PC-9 (cell line): ENCODE measurements at regions of chr3 and their contacts with region 1.

Region 1: DNA sequence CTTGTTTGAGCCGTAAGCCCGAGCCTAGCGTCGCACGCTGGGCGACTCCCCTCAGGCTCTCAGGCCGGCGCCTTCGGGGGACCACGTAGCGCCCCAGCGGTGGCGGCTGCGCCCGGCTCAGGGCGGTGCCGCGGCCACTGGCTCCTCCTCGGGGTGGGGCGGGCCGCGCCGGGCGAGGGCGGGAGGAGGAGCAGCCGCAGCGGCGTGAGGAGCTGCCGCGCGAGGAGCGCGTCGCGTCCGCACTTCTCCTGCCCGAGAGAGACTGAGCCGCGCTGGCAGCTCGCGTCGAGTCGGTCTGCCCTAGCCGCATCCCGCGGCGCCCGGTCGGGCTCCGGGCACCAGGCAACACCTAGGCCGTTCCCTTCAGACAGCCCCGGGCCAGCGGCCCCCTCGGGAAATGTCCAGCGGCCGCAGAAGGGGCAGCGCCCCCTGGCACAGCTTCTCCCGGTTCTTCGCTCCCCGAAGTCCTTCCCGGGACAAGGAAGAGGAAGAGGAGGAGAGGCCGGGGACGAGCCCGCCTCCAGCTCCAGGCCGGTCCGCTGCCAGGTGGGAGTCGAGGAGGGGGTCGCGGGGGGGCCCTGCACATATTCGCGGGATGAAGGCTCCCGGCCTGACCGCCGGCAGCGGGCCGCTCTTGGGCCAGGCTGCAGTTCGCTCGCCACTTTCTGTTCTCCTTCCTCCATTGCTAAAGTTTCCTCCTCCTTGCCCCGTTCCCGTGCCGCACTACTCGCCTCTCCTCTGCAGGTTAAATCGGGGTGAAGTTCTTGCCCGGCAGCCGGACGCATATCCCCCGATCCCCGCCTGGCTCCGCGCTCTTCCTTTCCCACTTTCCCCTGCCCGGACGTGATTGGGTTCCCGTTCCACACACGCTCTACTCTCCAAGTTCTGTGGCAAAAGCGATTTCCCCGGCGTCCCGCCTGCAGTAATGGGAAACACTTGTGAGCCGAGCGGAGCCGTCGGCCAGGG is at the start of gene CRYBG3:
- DNase-seq: peak; percentile 77 to 92
- H3K4me3 ChIP-seq: peak within 1 kb of the TSS; percentile 71
- H3K27ac ChIP-seq: peak within 1 kb of the TSS; percentile 36
- H3K4me1 ChIP-seq: peaks cover 19% of the 10 kb centered on the region
- H3K27me3 ChIP-seq: no peaks in the 10 kb centered on the region
- CTCF ChIP-seq: peak; percentile 60
- total RNA-seq, gene CRYBG3: 15.5 and 17.2 TPM in 2 replicates

Region 2: GRCh38 chr3:97391167-97391566 is 430.9 kb before region 1 on chr3:
- CTCF ChIA-PET with region 1: no interaction called
- POLR2A ChIA-PET with region 1: no interaction called
- intact Hi-C with region 1: no loop called
- DNase-seq: no peak
- H3K4me3 ChIP-seq: no peak overlapping the region
- H3K27ac ChIP-seq: no peak overlapping the region
- H3K4me1 ChIP-seq: no peaks in the 10 kb centered on the region
- H3K27me3 ChIP-seq: no peaks in the 10 kb centered on the region
- CTCF ChIP-seq: no peak

Region 3: GRCh38 chr3:97863031-97863430 is 40.9 kb after region 1 on chr3:
- CTCF ChIA-PET with region 1: no interaction called
- POLR2A ChIA-PET with region 1: no interaction called
- intact Hi-C with region 1: loop called (anchors 1 kb)
- DNase-seq: peak; percentile 24 to 93
- H3K4me3 ChIP-seq: no peak overlapping the region
- H3K27ac ChIP-seq: peak overlapping the region; percentile 32
- H3K4me1 ChIP-seq: peaks cover 18% of the 10 kb centered on the region
- H3K27me3 ChIP-seq: no peaks in the 10 kb centered on the region
- CTCF ChIP-seq: no peak

Region 4: DNA sequence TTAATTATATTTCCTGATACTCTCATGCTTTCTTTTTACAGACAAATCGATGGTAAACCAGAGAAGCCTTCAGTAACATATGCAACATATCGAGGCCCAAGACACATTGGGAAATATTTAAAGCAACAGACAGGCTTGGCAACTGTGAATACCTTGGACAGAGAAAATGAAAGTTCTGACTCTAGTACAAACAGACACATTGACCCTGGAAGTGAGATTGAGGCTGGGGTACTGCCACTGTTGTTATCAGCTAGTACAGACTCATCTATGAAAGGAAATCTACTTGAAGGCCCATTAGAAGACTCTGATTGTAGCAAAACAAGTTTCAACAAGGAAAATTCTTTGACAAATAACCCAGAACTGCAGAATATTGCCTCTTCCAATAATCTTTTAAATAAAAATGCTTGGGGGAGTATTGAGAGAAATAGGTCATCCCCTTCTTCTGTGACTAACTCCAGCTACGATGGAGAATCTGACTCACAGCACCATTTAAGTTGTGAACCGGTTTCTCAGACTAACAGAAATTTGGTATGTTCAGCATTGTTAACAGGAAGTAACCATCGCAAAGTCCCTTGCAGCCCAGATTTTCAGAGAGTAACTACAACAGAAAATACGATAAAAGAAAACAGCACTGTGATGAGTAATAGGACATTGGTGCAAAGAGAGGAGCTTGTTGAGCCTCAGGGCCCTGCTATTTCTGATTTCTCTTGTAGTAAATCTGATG is 49.9 kb after region 1 on chr3:
- CTCF ChIA-PET with region 1: no interaction called
- POLR2A ChIA-PET with region 1: no interaction called
- intact Hi-C with region 1: loop called (anchors 2 kb)
- DNase-seq: peak; percentile 53 to 90
- H3K4me3 ChIP-seq: no peak overlapping the region
- H3K27ac ChIP-seq: 0 out of 2 replicates have a peak overlapping the region, but pooled peaks have one; percentile 2
- H3K4me1 ChIP-seq: no peaks in the 10 kb centered on the region
- H3K27me3 ChIP-seq: no peaks in the 10 kb centered on the region
- CTCF ChIP-seq: no peak

Region 5: GRCh38 chr3:97914390-97914789 is 92.3 kb after region 1 on chr3:
- CTCF ChIA-PET with region 1: no interaction called
- POLR2A ChIA-PET with region 1: interaction called, 5 read pairs
- intact Hi-C with region 1: loop called (anchors 5 kb)
- DNase-seq: peak; percentile 41 to 91
- H3K4me3 ChIP-seq: no peak overlapping the region
- H3K27ac ChIP-seq: no peak overlapping the region
- H3K4me1 ChIP-seq: peaks cover 26% of the 10 kb centered on the region
- H3K27me3 ChIP-seq: no peaks in the 10 kb centered on the region
- CTCF ChIP-seq: no peak